Activated naive CD4-positive, alpha-beta T cell treated with anti-CD3 and anti-CD28 coated beads, Interleukin-2, amount 10 ng/mL, durations not matched to agents 7 days and 5 days (primary cell): ENCODE measurements at regions of chr9 and their contacts with region 1.

Region 1: DNA sequence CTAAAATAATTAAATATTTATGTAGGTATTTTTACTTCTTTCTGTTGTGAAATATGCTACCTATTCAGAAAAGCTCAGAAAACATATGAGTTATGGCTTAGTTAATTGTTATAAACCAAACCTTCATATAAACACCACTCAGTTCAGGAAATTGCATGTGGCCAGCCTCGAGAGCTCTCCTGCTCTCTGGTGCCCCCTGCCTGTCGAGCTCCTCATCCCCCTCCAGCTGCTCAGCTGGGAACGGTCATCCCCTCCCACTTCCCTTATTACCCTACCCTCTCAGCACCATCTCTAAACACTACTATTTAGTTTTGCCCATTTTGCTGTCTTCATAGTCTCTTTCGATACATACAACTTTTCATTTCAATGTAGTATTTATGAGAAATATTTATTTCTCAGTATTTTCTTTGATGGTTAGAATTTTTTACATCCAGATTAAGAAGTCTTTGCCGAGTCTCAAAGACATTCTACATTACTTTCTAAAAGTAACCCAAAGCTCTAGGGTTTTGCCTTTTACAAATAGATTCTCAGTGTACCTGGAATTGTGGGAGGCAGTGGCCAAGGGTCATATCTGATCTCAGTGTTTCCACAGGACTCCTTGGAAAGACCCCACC is 51.2 kb upstream of the SEMA4D start:
- DNase-seq: peak; percentile 90
- H3K4me3 Mint-ChIP-seq: no peak overlapping the region
- H3K27ac Mint-ChIP-seq: peak overlapping the region; percentile 59
- H3K4me1 Mint-ChIP-seq: peaks cover 21% of the 10 kb centered on the region
- H3K27me3 Mint-ChIP-seq: peaks cover 32% of the 10 kb centered on the region

Region 2: GRCh38 chr9:89358985-89359384 is 190.2 kb before region 1 on chr9:
- CTCF ChIA-PET with region 1: no interaction called
- DNase-seq: no peak
- H3K4me3 Mint-ChIP-seq: no peak overlapping the region
- H3K27ac Mint-ChIP-seq: no peak overlapping the region
- H3K4me1 Mint-ChIP-seq: peaks cover 5% of the 10 kb centered on the region
- H3K27me3 Mint-ChIP-seq: no peaks in the 10 kb centered on the region

Region 3: GRCh38 chr9:89418882-89419640 is 130.1 kb before region 1 on chr9:
- CTCF ChIA-PET with region 1: interaction called, 26 read pairs
- DNase-seq: peak; percentile 83
- H3K4me3 Mint-ChIP-seq: peak overlapping the region; percentile 68
- H3K27ac Mint-ChIP-seq: peak overlapping the region; percentile 96
- H3K4me1 Mint-ChIP-seq: peaks cover 78% of the 10 kb centered on the region
- H3K27me3 Mint-ChIP-seq: no peaks in the 10 kb centered on the region

Region 4: GRCh38 chr9:89455356-89455824 is 93.7 kb before region 1 on chr9:
- CTCF ChIA-PET with region 1: interaction called, 17 read pairs
- DNase-seq: peak; percentile 69
- H3K4me3 Mint-ChIP-seq: peak overlapping the region; percentile 36
- H3K27ac Mint-ChIP-seq: peak overlapping the region; percentile 84
- H3K4me1 Mint-ChIP-seq: peaks cover 92% of the 10 kb centered on the region
- H3K27me3 Mint-ChIP-seq: no peaks in the 10 kb centered on the region

Region 5: DNA sequence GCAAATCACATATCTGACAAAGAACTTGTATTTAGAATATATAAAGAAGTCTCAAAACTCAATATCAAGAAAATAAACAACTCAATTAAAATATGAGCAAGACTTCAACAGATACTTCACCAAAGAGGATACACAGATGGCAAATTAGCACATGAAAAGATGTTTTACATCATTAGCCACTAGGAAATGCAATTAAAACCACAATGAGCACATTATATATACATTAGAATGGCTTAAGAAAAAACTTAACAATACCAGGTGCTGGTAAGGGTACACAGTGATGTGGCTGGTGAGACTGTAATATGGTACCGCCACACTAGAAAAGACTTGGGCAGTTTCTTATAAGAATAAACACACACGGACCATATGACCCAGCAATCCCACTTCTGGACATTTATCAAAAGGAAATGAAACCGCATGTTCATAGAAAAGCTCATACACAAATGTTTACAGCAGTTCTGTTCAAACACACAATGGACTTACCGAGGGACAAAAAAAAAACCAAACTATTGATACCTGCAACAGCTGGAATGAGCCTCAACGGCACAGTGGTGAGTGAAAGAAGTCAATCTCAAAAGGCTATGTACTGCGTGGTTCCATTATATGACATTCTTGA is 78.8 kb before region 1 on chr9:
- CTCF ChIA-PET with region 1: interaction called, 10 read pairs
- DNase-seq: peak; percentile 16
- H3K4me3 Mint-ChIP-seq: peak overlapping the region; percentile 1
- H3K27ac Mint-ChIP-seq: peak overlapping the region; percentile 83
- H3K4me1 Mint-ChIP-seq: peaks cover 92% of the 10 kb centered on the region
- H3K27me3 Mint-ChIP-seq: no peaks in the 10 kb centered on the region

Region 6: DNA sequence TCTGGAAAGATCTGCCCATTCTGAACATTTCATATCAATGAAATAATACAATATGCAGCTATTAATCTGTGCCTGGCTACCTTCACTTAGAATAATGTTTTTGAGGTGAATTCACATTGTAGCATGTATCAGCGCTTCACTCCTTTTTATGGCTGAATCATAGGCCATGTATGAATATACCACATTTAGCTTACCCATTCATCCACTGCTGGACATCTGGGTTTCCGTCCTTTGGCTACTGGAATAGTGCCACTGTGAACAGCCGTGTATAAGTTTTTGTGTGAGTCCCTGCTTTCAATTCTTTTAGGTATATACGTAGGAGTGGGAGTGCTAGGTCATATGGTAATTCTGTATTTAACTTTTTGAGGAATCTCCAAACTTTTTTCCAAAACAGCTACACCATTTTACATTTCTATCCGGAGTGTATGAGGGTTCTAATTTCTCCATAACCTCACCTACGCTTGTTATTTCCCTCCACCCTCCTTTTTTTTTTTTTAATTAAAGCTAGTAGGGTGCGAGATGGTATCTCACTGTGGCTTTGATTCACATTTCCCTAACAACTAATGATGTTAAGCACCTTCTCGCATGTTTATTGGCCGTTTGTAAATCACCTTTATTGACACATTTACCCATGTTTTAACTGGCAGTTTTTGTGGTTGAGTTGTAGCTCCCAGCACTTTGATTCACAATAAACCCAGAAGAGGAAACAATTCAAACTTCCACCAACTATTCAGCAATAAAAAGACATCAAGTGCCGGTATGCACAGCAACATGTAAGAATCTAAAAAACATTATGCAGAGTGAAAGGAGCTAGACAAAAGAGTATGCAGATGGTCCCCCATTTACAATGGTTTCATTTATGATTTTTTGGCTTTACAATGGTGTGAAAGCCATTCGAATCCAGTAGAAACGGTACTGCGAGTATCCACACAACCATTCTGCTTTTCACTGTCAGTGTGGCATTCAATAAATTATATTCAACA is 59.3 kb before region 1 on chr9:
- CTCF ChIA-PET with region 1: interaction called, 70 read pairs
- DNase-seq: no peak
- H3K4me3 Mint-ChIP-seq: peak overlapping the region; percentile 32
- H3K27ac Mint-ChIP-seq: peak overlapping the region; percentile 81
- H3K4me1 Mint-ChIP-seq: peaks cover 94% of the 10 kb centered on the region
- H3K27me3 Mint-ChIP-seq: no peaks in the 10 kb centered on the region

Region 7: DNA sequence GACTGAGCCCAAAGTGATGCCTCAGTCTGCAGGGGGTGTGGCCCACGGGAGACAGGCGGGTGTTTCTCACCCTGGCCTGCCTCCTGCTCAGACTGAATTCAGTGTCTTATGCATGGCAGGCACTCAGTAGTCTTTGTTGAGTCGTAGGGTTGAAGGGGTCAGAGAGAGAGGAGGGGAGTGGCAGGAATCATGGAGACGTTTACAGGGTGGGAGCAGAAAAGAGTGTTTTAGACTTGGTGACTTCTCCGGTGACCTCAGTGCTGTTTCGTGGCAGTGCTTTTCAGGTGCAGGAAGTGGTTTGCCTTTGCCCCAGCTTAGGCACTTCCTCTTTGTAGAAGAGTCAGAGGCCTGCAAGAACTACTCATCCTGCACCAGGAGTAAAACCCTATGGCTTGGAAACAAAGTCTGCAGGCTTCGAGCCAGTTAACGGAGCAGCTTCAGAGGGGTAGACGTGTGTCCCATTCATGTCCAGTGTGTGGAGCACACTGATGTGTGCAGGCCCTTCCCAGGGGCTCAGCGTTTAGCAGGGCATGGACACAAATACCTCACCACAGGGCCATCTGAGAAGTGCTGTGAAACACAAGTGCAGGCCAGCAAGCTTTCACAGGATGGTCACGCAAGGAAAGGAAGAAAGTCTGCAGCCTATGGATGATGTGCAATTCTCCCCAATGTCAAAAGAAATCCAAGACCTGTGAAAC is 26.7 kb before region 1 on chr9:
- CTCF ChIA-PET with region 1: interaction called, 52 read pairs
- DNase-seq: peak; percentile 89
- H3K4me3 Mint-ChIP-seq: peak overlapping the region; percentile 25
- H3K27ac Mint-ChIP-seq: peak overlapping the region; percentile 92
- H3K4me1 Mint-ChIP-seq: peaks cover 97% of the 10 kb centered on the region
- H3K27me3 Mint-ChIP-seq: no peaks in the 10 kb centered on the region

Region 8: DNA sequence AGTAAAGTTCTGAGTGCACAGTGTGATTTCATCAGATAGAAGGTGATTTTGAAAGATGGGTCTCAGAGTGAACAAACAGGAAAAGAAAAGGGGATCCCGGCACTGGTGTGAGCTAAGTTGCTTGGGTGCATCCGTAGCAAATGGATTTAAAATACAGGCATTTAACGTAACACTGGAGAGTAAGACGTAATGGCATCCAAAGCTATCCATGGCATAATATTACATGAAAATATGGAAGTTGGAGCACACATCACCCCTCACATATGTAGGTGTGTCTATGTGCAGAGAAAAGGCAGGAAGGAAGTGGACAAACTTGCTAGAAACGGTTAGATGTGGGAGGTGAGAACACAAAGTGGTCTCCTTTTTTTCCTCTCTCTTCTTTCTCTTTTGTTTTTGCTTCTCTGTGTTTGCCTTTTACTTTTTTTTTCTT is 13.0 kb before region 1 on chr9:
- CTCF ChIA-PET with region 1: interaction called, 23 read pairs
- DNase-seq: no peak
- H3K4me3 Mint-ChIP-seq: peak overlapping the region; percentile 55
- H3K27ac Mint-ChIP-seq: peak overlapping the region; percentile 95
- H3K4me1 Mint-ChIP-seq: peaks cover 88% of the 10 kb centered on the region
- H3K27me3 Mint-ChIP-seq: no peaks in the 10 kb centered on the region

Region 9: DNA sequence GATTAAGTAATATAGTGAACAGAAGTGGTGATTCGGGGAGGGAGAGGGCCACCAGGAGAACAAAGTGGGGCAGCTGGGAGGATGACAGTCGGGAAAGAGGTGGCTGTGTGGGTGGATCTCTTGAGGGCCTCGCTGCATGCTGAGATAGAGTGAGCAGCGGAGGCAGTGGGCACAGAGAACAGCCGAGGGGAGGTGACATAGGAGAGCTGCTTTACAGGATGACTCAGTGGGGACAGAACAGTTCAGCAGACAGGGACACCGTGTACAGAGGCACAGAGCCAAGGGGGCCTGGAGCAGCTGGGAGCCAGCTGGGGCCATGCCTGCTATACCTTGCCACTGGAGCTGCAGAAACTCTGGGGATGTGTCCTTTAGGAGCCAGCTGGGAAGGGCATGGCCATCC is 329.5 kb after region 1 on chr9:
- CTCF ChIA-PET with region 1: no interaction called
- DNase-seq: no peak
- H3K4me3 Mint-ChIP-seq: no peak overlapping the region
- H3K27ac Mint-ChIP-seq: no peak overlapping the region
- H3K4me1 Mint-ChIP-seq: no peaks in the 10 kb centered on the region
- H3K27me3 Mint-ChIP-seq: peaks cover 8% of the 10 kb centered on the region